OCI-LY7 (cell line): ENCODE measurements at regions of chr3 and their contacts with region 1.

Region 1: GRCh38 chr3:167843886-167844285 is 108.4 kb downstream of the SERPINI1 start:
- DNase-seq: peak; percentile 75
- H3K4me3 ChIP-seq: peak overlapping the region; percentile 26
- H3K27ac ChIP-seq: peak overlapping the region; percentile 75
- H3K4me1 ChIP-seq: peaks cover 44% of the 10 kb centered on the region
- CTCF ChIP-seq: no peak

Region 2: DNA sequence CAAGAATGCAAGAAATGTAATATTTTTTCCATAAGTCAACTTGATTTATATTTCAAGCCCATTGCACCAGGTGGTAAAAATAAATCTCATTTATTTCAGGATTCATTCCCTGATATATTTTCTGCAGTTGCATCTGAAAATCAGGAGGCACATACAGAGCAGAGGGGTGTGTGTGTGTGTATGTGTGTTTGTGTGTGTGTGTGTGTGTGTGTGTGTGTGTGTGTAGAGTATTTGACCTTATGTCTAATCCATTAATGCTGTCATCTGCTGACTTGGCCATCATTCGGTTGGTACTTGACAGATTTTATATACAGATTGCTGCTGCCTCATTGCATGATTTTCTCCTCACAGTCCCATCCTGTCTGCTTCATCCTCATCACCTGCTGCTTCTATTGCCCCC is 10.2 kb after region 1 on chr3:
- CTCF ChIA-PET with region 1: no interaction called
- POLR2A ChIA-PET with region 1: interaction called, 11 read pairs
- intact Hi-C with region 1: no loop called
- DNase-seq: no peak
- H3K4me3 ChIP-seq: no peak overlapping the region
- H3K27ac ChIP-seq: no peak overlapping the region
- H3K4me1 ChIP-seq: no peaks in the 10 kb centered on the region
- CTCF ChIP-seq: no peak

Region 3: DNA sequence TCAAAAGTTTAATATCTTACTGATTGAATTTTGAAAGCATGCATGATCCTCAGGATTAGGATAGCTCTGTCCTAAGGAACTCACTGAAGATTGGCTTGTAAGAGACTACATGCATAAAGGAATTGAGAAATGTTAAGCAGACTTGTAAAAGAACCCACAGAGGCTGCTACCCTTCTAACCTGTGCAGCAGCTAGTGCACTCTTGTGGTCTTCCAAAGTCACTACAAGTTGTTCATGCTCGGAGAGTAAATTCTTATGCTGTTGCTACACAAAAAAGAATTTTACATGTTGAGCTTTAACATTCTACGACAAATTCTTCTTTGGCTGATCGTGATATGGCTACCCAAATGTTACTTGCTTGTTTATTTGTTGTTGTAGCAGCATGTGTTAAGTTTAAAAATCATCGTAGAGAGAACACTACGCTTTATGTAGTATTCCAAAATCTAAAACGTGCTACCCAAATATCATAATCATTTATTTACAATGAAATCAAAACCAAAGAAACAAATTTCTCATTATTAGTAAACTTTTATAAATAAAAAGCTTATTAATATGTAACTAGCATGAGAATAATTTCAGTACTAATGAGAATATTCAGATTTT is 196.8 kb after region 1 on chr3:
- CTCF ChIA-PET with region 1: no interaction called
- POLR2A ChIA-PET with region 1: no interaction called
- intact Hi-C with region 1: loop called (anchors 5 kb)
- DNase-seq: peak; percentile 63
- H3K4me3 ChIP-seq: no peak overlapping the region
- H3K27ac ChIP-seq: no peak overlapping the region
- H3K4me1 ChIP-seq: no peaks in the 10 kb centered on the region
- CTCF ChIP-seq: peak; percentile 87

Region 4: GRCh38 chr3:168165390-168166269 is 321.7 kb after region 1 on chr3:
- CTCF ChIA-PET with region 1: no interaction called
- POLR2A ChIA-PET with region 1: no interaction called
- intact Hi-C with region 1: loop called (anchors 10 kb)
- DNase-seq: peak; percentile 84
- H3K4me3 ChIP-seq: peak overlapping the region; percentile 26
- H3K27ac ChIP-seq: peak overlapping the region; percentile 4
- H3K4me1 ChIP-seq: peaks cover 27% of the 10 kb centered on the region
- CTCF ChIP-seq: peak; percentile 96

Region 5: DNA sequence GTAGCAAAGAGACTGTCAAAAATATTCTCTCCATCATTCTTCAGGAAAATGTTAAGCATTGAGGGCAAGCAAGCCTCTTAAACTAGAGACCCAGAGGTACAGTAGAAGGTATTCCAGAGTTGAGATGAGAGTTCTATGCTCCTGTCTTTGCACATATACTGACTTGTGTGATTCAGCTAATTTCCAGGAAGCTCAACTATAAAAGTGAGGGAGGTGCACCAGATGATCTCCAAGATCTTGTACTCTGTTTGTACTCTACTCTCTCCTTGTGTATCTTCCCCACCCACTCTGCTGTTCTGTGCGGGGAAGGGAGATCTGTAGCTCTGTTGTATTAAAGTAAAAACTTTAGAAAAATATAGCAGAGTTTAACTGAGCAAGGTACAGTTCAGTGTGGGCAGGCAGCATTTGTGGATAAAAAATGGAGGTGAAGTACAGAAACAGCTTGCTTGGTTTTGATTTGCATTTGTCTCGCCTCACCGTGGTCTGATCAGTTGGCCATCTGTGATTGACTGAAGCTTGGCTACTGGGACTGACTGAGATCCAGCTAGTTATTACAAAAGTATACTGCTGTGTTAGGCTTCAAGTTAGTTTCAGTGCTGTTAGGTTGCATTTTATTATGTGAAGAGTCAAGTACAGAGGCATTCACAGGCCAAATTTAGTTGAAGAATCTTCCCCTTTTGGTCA is 715.0 kb after region 1 on chr3:
- CTCF ChIA-PET with region 1: no interaction called
- POLR2A ChIA-PET with region 1: no interaction called
- intact Hi-C with region 1: no loop called
- DNase-seq: no peak
- H3K4me3 ChIP-seq: no peak overlapping the region
- H3K27ac ChIP-seq: no peak overlapping the region
- H3K4me1 ChIP-seq: no peaks in the 10 kb centered on the region
- CTCF ChIP-seq: no peak